Activated CD4-positive, alpha-beta memory T cell treated with anti-CD3 and anti-CD28 coated beads for 36 hours (primary cell): ENCODE measurements at regions of chr14 and their contacts with region 1.

Region 1: GRCh38 chr14:63933110-63933509 is 80.3 kb downstream of the SYNE2 start:
- DNase-seq: peak; percentile 10
- H3K4me3 Mint-ChIP-seq: peak overlapping the region; percentile 27
- H3K27ac Mint-ChIP-seq: peak overlapping the region; percentile 10
- H3K4me1 Mint-ChIP-seq: peaks cover 29% of the 10 kb centered on the region
- H3K27me3 Mint-ChIP-seq: no peaks in the 10 kb centered on the region

Region 2: DNA sequence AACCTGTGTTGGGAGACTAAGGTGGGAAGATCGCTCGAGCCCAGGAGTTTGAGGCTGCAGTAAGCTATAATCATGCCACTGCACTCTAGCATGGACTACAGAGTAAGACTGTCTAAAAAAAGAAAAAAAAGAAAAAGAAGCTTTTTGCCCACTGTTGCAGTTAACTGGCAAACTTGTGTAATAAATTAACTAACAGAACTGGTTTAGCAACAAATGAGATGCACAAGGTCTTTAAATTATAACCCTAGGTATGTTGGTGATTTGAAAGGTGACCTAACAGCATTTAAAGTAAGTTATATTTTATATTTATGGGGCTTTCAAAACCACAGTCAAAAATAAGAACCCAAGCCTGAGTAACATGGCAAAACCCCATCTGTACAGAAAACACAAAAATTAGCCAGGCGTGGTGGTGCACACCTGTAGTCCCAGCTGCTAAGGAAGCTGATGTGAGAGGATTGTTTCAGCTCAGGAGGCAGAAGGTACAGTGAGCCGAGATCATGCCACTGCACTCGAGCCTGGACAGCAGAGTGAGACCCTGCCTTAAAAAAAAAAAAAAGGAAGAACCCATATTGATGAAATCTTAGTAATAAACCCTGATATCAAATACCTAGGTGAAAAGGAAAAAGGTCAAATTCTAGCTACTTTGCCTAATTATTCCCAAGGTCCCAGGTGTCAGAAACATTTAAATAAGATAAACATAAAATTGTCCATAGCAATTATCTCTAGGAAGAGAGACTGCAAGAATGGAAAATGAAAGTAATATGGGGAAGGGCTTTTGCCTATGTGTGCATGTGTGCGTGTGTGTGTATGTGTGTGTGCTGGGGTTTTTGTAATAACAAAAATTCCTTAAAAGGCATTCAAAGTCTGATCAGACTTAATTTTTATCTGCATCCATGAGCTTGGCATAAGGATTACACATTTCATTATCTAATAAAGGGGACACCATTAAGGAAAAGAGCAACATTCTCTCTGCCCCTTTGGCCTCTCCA is 64.9 kb before region 1 on chr14:
- CTCF ChIA-PET with region 1: interaction called, 5 read pairs
- POLR2A ChIA-PET with region 1: no interaction called
- intact Hi-C with region 1: loop called (anchors 1 kb)
- DNase-seq: peak; percentile 24
- H3K4me3 Mint-ChIP-seq: peak overlapping the region; percentile 48
- H3K27ac Mint-ChIP-seq: peak overlapping the region; percentile 49
- H3K4me1 Mint-ChIP-seq: peaks cover 59% of the 10 kb centered on the region
- H3K27me3 Mint-ChIP-seq: no peaks in the 10 kb centered on the region

Region 3: DNA sequence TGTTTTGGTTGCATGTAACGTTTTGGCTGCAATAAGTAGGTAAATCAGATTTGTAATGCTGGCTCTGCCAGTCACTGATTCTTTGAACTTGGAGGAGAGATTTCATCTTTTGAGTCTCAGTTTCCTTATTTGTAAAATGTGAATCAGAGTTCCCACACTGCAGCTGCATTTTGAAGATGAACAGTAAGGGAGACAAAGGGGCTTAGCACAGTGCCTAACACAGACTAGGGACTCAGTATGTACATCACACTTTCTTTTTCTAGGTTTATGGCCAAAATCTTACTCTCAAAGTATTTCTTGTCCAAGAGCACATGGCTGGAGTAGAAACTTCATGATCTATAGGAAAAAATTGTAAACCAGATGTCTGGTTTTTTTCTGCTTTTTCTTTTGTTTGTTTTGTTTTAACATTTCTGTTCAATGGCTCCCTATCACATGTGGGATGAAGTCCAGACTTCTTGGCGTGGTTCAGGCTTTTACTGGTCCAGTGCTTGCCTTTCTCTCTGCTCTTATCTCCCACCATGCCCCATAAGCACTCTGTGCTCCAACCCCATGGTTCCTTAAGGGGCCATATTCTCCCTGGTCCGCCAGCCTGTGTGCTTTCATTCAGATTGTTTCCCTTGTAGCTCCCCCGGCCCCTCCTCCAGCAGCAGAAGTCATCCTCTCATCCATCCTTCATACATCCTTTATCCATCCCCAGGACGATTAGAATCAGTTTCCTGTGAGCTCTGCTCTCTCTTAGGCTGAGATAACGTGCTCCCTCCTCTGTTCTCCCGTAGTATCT is 22.3 kb before region 1 on chr14:
- CTCF ChIA-PET with region 1: interaction called, 3 read pairs
- POLR2A ChIA-PET with region 1: interaction called, 5 read pairs
- intact Hi-C with region 1: loop called (anchors 1 kb)
- DNase-seq: no peak
- H3K4me3 Mint-ChIP-seq: no peak overlapping the region
- H3K27ac Mint-ChIP-seq: peak overlapping the region; percentile 55
- H3K4me1 Mint-ChIP-seq: peaks cover 61% of the 10 kb centered on the region
- H3K27me3 Mint-ChIP-seq: no peaks in the 10 kb centered on the region

Region 4: DNA sequence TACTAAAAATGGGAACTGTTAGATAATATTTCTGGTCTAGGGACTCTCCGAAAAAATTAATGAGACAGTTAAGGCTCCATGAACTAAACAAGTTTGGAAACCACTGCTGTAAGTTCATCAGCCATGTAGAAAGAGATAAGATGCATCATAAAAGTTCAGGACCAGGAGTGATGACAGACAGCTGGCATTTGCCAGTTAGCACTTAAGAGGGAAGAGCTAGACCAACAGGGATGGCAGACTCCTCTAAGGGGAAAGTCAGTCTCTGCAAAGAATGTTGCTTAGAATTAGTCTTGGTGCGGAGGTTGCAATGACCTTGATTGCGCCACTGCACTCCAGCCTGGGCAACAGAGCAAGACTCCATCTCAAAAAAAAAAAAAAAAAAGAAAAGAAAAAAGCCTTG is 49.0 kb after region 1 on chr14:
- CTCF ChIA-PET with region 1: no interaction called
- POLR2A ChIA-PET with region 1: no interaction called
- intact Hi-C with region 1: loop called (anchors 2 kb)
- DNase-seq: no peak
- H3K4me3 Mint-ChIP-seq: no peak overlapping the region
- H3K27ac Mint-ChIP-seq: no peak overlapping the region
- H3K4me1 Mint-ChIP-seq: peaks cover 15% of the 10 kb centered on the region
- H3K27me3 Mint-ChIP-seq: no peaks in the 10 kb centered on the region

Region 5: GRCh38 chr14:64209444-64210131 is 276.5 kb after region 1 on chr14:
- CTCF ChIA-PET with region 1: no interaction called
- POLR2A ChIA-PET with region 1: no interaction called
- intact Hi-C with region 1: no loop called
- DNase-seq: no peak
- H3K4me3 Mint-ChIP-seq: no peak overlapping the region
- H3K27ac Mint-ChIP-seq: no peak overlapping the region
- H3K4me1 Mint-ChIP-seq: no peaks in the 10 kb centered on the region
- H3K27me3 Mint-ChIP-seq: no peaks in the 10 kb centered on the region